Activated naive CD4-positive, alpha-beta T cell treated with anti-CD3 and anti-CD28 coated beads for 36 hours (primary cell): ENCODE measurements at regions of chrX and their contacts with region 1.

Region 1: GRCh38 chrX:13051529-13052172 is 7.2 kb upstream of the FAM9C start:
- DNase-seq: peak; percentile 43
- H3K4me3 Mint-ChIP-seq: peak overlapping the region; percentile 36
- H3K27ac Mint-ChIP-seq: peak overlapping the region; percentile 95
- H3K4me1 Mint-ChIP-seq: peaks cover 77% of the 10 kb centered on the region
- H3K27me3 Mint-ChIP-seq: no peaks in the 10 kb centered on the region

Region 2: GRCh38 chrX:12843668-12844279 is 207.9 kb before region 1 on chrX:
- CTCF ChIA-PET with region 1: no interaction called
- intact Hi-C with region 1: loop called (anchors 5 kb)
- DNase-seq: no peak
- H3K4me3 Mint-ChIP-seq: peak overlapping the region; percentile 65
- H3K27ac Mint-ChIP-seq: peak overlapping the region; percentile 93
- H3K4me1 Mint-ChIP-seq: peaks cover 17% of the 10 kb centered on the region
- H3K27me3 Mint-ChIP-seq: no peaks in the 10 kb centered on the region

Region 3: GRCh38 chrX:12984629-12985319 is 66.9 kb before region 1 on chrX:
- CTCF ChIA-PET with region 1: no interaction called
- intact Hi-C with region 1: loop called (anchors 1 kb)
- DNase-seq: peak; percentile 54
- H3K4me3 Mint-ChIP-seq: peak overlapping the region; percentile 54
- H3K27ac Mint-ChIP-seq: peak overlapping the region; percentile 95
- H3K4me1 Mint-ChIP-seq: peaks cover 77% of the 10 kb centered on the region
- H3K27me3 Mint-ChIP-seq: no peaks in the 10 kb centered on the region

Region 4: DNA sequence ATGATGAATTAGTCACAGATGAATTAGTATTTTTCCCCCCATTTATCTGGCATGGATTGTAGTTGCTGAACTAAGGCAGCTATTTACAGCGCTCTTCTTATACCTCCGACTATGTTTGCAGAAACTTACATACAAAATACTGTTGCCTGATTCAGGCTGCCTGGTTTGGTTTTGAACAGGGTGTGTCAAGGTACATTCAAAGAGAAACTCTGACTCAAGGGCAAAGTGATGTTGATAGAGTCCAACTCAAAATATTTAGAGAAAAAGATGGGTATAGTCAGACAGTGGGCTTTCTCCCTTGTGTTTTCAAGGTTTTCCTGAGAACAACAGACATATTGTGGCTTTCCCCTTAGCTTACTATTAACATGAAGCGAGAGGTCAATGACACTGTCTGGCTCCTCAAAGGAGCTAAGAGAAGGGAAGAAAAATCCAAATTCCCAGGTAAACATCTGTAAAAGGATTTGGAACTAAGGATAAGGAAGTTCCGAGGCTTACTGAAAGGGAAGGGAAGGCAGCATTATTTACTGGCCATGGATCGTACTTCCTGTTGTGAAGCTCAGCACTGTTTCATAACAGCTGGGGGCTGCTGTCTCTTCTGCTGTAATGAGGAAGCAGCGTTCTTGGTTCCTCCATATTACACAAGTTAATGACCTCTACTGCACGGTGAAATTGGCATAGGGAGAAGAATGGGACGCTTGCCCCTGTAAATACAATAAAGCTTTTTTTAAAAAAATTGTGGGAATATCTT is 38.1 kb before region 1 on chrX:
- CTCF ChIA-PET with region 1: no interaction called
- intact Hi-C with region 1: loop called (anchors 1 kb)
- DNase-seq: peak; percentile 47
- H3K4me3 Mint-ChIP-seq: peak overlapping the region; percentile 51
- H3K27ac Mint-ChIP-seq: peak overlapping the region; percentile 53
- H3K4me1 Mint-ChIP-seq: peaks cover 70% of the 10 kb centered on the region
- H3K27me3 Mint-ChIP-seq: no peaks in the 10 kb centered on the region

Region 5: GRCh38 chrX:13077168-13077567 is 25.5 kb after region 1 on chrX:
- CTCF ChIA-PET with region 1: interaction called, 7 read pairs
- intact Hi-C with region 1: loop called (anchors 1 kb)
- DNase-seq: peak; percentile 69
- H3K4me3 Mint-ChIP-seq: no peak overlapping the region
- H3K27ac Mint-ChIP-seq: peak overlapping the region; percentile 80
- H3K4me1 Mint-ChIP-seq: peaks cover 72% of the 10 kb centered on the region
- H3K27me3 Mint-ChIP-seq: no peaks in the 10 kb centered on the region